ENCODE measurements at regions of chr7 and their contacts with region 1.

Region 1: DNA sequence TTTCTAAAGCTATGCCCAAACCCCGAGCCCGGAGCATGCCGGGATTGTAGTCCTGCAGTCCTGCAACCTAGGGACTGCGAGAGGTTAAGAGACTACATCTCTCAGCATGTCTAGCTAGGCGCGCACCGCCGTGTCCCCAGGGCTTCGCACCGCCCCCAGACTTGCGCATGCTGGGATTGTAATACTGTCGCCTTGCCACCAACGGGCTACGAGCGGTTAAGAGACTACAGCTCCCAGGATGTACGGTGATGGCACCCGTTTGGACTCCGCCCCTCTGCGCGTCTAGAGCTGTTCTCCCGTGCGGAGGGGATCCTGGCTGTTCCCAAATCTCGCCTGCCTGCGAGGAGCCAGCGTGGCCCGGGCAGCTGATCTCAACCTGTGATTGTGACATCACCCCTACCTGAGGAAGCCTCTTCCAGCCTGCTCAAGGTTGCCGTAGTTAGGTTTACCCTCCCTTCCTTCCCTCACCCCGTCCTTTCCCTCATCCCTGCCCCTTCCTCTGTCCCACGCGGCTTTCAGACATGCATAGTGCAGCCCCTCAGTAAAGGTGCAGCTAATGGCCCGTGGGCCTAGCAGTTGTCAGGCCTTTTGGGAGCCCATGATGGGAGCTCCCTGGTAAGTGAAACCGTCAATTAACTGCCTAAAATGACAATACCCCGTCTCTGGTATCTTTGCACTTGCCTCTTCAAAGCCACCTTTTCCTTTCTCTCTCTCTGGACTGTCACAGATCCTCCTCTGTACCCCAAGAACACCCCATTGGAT is 6.3 kb upstream of the ZNF736 start:
- DNase-seq: peak; percentile 87
- ATAC-seq: peak; percentile 93
- H3K4me3 Mint-ChIP-seq: peak overlapping the region; percentile 94
- H3K27ac Mint-ChIP-seq: peak overlapping the region; percentile 98
- H3K4me1 Mint-ChIP-seq: peaks cover 40% of the 10 kb centered on the region
- H3K27me3 Mint-ChIP-seq: no peaks in the 10 kb centered on the region
- CTCF ChIP-seq: no peak

Region 2: DNA sequence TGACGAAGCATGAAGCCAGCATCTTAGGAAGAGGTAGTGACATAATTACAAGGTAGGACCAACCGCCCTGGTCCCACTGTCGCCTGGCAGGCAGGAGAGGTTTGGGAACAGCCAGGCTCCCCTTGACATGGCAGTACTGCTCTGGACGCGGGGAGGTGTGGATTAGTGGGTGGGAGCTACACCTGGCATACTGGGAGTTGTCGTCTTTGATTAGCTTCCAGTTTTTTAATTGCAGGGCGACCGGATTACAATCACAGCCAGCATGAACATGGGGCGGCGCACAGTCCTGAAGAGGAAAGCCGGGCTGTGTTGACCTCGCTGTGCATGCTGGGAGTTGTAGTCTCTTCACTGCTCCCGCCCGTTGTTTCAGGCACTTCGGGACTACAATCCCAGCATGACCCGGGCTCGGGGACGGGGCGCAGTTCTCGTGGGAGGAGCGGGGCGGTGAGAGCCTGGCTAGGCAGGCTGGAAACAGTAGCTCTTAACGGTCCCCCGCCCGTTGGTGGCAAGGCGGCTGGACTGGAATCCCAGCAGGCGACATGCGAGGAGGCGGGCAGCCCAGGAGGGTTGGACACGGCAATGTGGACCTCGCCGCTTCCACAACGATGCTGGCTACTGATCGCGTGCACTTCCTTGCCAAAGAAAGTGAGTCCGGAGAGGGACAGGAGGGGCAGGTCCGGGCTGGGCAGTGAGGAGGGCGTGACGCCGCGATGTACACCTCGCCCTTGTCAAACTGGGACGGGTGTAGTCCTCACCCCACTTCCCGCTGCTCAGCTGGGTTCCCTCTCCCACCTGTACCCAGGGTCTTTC is 406.8 kb before region 1 on chr7:
- CTCF ChIA-PET with region 1: no interaction called
- POLR2A ChIA-PET with region 1: no interaction called
- intact Hi-C with region 1: loop called (anchors 2 kb)
- DNase-seq: peak; percentile 61
- ATAC-seq: peak; percentile 92
- H3K4me3 Mint-ChIP-seq: peak overlapping the region; percentile 96
- H3K27ac Mint-ChIP-seq: peak overlapping the region; percentile 95
- H3K4me1 Mint-ChIP-seq: peaks cover 2% of the 10 kb centered on the region
- H3K27me3 Mint-ChIP-seq: no peaks in the 10 kb centered on the region
- CTCF ChIP-seq: no peak

Region 3: GRCh38 chr7:64037095-64037494 is 270.3 kb before region 1 on chr7:
- CTCF ChIA-PET with region 1: no interaction called
- POLR2A ChIA-PET with region 1: no interaction called
- intact Hi-C with region 1: no loop called
- DNase-seq: no peak
- ATAC-seq: no peak
- H3K4me3 Mint-ChIP-seq: no peak overlapping the region
- H3K27ac Mint-ChIP-seq: no peak overlapping the region
- H3K4me1 Mint-ChIP-seq: no peaks in the 10 kb centered on the region
- H3K27me3 Mint-ChIP-seq: no peaks in the 10 kb centered on the region
- CTCF ChIP-seq: no peak

Region 4: DNA sequence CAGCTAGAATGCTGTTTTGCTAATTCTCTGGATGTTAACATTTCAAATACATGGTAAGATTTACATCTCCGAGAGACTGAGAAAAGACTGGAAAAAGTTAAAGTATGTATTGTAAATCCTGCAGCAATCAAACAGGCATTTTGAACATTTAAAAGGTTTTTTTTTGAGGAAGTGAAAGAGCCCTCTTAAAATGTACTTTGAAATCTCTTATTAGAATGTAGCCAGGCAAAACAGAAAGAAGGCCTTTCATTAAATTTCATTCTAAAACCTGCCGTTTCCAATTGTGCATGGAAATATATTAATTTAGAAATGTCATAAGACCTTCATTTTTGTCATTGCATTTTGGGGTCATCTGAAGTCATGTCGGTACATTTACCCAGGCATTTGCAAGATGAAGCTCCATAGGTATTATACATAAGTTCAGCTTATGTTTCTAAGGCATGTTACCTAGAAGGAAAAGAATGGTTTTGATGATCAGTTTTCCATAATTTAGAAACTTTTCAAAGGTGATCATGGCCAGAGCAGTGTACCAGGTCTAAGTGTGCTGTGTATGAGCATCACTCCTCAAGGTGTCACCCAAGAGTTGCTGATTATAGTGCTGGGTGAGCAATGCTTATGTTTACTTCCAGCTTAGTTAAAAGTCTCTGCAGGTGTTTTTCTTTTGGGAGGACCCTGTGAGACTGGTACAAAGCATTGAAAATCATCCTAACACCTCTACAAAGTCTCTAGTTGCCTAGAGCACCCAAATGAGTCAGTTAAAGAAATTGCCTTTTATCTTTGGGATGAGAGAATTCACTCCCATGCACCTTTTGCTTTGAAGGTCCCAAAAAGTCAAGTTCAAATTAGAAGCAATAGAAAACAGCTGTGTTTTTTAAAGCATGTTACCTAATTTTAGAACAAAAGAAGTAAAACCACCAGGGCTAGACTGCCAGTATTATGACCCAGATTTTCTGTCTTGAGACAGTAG is 13.4 kb after region 1 on chr7:
- CTCF ChIA-PET with region 1: interaction called, 5 read pairs
- POLR2A ChIA-PET with region 1: interaction called, 108 read pairs
- intact Hi-C with region 1: loop called (anchors 1 kb)
- DNase-seq: no peak
- ATAC-seq: peak; percentile 61
- H3K4me3 Mint-ChIP-seq: peak overlapping the region; percentile 28
- H3K27ac Mint-ChIP-seq: peak overlapping the region; percentile 83
- H3K4me1 Mint-ChIP-seq: peaks cover 50% of the 10 kb centered on the region
- H3K27me3 Mint-ChIP-seq: no peaks in the 10 kb centered on the region
- CTCF ChIP-seq: no peak

Region 5: GRCh38 chr7:64794171-64794844 is 486.9 kb after region 1 on chr7 and contains the start of gene ZNF138:
- CTCF ChIA-PET with region 1: no interaction called
- POLR2A ChIA-PET with region 1: interaction called, 12 read pairs
- intact Hi-C with region 1: loop called (anchors 1 kb)
- DNase-seq: peak; percentile 83
- ATAC-seq: peak; percentile 99
- H3K4me3 Mint-ChIP-seq: peak within 1 kb of the TSS; percentile 99
- H3K27ac Mint-ChIP-seq: peak within 1 kb of the TSS; percentile 98
- H3K4me1 Mint-ChIP-seq: peaks cover 27% of the 10 kb centered on the region
- H3K27me3 Mint-ChIP-seq: no peaks in the 10 kb centered on the region
- CTCF ChIP-seq: no peak
- total RNA-seq, gene ZNF138: 14.2 and 17.8 TPM in 2 replicates

Region 6: GRCh38 chr7:65006094-65006992 is 698.9 kb after region 1 on chr7 and contains the start of gene ERV3-1:
- CTCF ChIA-PET with region 1: no interaction called
- POLR2A ChIA-PET with region 1: interaction called, 4 read pairs
- intact Hi-C with region 1: loop called (anchors 1 kb)
- DNase-seq: peak; percentile 77
- ATAC-seq: peak; percentile 99
- H3K4me3 Mint-ChIP-seq: peak within 1 kb of the TSS; percentile 98
- H3K27ac Mint-ChIP-seq: peak within 1 kb of the TSS; percentile 95
- H3K4me1 Mint-ChIP-seq: peaks cover 46% of the 10 kb centered on the region
- H3K27me3 Mint-ChIP-seq: no peaks in the 10 kb centered on the region
- CTCF ChIP-seq: no peak
- total RNA-seq, gene ERV3-1: 23.2 and 24.8 TPM in 2 replicates

Region 7: DNA sequence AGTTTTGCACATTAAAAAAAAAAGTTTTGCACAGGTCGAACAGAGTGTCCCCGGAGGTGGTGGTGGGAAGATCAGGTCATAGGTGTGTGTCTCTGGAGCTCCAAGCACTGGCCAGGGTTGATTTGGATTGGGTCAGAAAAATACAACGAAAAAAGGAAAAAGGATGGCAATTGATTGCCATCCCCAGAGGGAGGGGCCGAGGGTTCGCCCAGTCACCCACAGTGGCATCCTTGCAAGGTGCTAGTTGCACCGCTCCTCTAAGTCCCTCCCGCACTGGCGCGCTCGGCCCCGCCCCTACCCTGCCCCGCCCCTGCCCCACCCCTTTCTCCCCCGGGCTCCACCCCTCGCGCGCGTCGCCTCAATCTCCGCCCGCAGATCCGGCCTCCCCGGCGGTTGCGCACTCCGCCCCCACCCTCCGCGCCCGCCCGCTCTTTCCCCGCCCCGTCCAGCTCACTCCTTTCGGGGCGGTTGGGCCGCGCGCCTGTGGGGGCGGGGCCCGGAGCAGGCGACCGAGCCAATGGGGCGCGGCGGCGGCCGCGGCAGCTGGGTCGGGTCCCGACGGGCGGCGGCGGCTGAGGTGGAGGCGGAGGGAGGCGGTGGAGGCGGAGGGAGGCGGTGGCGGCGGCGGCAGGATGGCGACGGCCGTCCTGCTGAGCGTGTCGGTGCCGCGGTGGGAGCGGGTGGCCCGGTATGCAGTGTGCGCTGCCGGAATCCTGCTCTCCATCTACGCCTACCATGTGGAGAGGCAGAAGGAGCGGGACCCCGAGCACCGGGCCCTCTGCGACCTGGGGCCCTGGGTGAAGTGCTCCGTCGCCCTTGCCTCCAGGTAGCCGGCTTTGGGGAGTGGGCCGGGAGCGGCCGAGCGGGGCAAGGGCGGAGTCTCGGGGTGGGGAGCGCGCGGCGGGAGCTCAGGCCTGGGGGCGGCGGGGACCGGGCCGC is 730.6 kb after region 1 on chr7:
- CTCF ChIA-PET with region 1: no interaction called
- POLR2A ChIA-PET with region 1: no interaction called
- intact Hi-C with region 1: no loop called
- DNase-seq: peak; percentile 61
- ATAC-seq: peak; percentile 94
- H3K4me3 Mint-ChIP-seq: peak overlapping the region; percentile 75
- H3K27ac Mint-ChIP-seq: peak overlapping the region; percentile 65
- H3K4me1 Mint-ChIP-seq: peaks cover 8% of the 10 kb centered on the region
- H3K27me3 Mint-ChIP-seq: no peaks in the 10 kb centered on the region
- CTCF ChIP-seq: no peak

Region 8: DNA sequence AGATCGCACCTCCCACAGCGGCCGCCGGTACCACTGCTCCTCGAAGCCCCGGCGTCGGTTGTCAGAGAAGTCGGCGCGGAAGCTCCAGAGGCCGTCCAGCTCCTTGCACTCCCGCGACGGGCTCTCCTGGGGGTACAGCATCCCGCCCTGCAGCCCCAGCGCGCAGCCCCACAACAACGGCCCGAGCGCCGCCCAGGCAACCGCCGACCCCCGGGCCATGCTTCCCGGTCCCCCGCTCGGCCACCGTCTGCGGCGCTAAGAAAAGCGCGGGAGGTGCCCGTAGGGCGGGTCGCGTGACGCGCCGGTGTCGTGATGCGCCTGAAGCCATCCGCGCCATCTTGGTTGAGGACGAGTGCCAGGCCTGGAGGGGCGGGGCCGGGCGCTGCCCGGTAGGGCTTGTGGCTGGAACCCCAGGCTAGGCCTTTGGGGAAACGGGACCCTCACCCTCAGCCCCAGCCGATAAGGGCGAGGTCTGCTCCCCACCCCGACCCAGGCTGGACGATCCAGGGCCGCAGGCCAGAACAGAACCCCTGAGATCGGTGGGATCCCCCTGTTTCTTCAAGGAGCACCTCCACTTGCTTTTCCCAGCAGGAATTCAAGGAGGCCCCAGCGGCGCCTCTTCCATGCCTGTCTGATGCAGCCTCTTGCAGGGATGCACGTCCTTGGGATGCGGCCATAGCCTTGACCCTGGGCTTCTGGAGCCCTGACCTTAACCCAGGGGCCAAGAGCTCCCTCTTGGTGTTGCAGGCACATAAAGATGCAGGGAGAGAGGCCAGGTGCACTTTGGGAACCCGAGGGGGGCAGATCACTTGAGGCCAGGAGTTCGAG is 1674.7 kb after region 1 on chr7 and contains the start of gene GUSB:
- CTCF ChIA-PET with region 1: no interaction called
- POLR2A ChIA-PET with region 1: no interaction called
- intact Hi-C with region 1: loop called (anchors 5 kb)
- DNase-seq: peak; percentile 85
- ATAC-seq: peak; percentile 94
- H3K4me3 Mint-ChIP-seq: peak within 1 kb of the TSS; percentile 79
- H3K27ac Mint-ChIP-seq: peak within 1 kb of the TSS; percentile 46
- H3K4me1 Mint-ChIP-seq: peaks cover 19% of the 10 kb centered on the region
- H3K27me3 Mint-ChIP-seq: no peaks in the 10 kb centered on the region
- CTCF ChIP-seq: no peak
- total RNA-seq, gene GUSB: 33.6 and 40.8 TPM in 2 replicates

Measured in activated B cell treated with CpG ODN at 0.5 μM for 24 hours (primary cell).